ENCODE measurements at regions of chr18 and their contacts with region 1.

Region 1: DNA sequence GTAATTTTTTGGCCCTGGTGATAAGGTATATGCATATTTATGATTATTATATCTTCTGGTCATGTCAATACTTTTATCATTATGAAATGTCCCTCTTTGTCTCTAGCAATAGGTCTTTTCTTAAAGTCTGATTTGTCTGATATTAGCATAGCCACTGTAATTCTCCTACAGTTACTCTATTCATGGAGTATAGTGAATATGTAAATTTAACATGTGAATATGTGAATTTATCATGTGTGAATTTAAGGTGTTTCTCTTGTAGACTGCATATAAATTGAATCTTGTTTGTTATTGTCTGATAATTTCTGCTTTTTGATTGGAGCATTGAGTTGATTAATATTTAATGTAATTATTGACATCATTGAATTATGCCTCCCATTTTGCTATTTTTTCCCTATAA is 259.4 kb downstream of the HRH4 start:
- H3K4me3 Mint-ChIP-seq: no peak overlapping the region
- H3K27ac Mint-ChIP-seq: no peak overlapping the region
- H3K4me1 Mint-ChIP-seq: no peaks in the 10 kb centered on the region
- H3K27me3 Mint-ChIP-seq: peaks cover 1% of the 10 kb centered on the region

Region 2: DNA sequence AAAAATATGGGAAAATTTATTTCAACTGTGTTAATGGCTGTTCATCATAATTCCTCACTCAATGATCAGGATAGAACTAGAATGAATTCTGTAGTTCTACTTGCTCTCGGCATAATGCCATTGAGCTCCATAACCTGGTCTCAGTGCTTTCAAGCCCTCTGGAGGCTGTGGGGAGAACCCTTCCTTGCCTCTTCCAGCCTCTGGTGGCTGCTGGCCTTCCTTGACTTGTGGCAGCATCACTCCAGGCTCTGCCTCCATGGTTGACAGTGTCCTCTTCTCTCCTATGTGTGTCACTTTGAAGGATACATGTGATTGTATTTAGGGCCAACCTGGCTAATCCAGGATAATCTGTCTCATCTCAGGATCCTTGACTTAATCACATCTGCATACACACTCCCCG is 607.9 kb before region 1 on chr18:
- intact Hi-C with region 1: no loop called
- H3K4me3 Mint-ChIP-seq: no peak overlapping the region
- H3K27ac Mint-ChIP-seq: no peak overlapping the region
- H3K4me1 Mint-ChIP-seq: peaks cover 10% of the 10 kb centered on the region
- H3K27me3 Mint-ChIP-seq: no peaks in the 10 kb centered on the region

Region 3: GRCh38 chr18:24659827-24660720 is 59.7 kb before region 1 on chr18:
- intact Hi-C with region 1: no loop called
- H3K4me3 Mint-ChIP-seq: peak overlapping the region; percentile 73
- H3K27ac Mint-ChIP-seq: peak overlapping the region; percentile 39
- H3K4me1 Mint-ChIP-seq: peaks cover 11% of the 10 kb centered on the region
- H3K27me3 Mint-ChIP-seq: no peaks in the 10 kb centered on the region

Region 4: DNA sequence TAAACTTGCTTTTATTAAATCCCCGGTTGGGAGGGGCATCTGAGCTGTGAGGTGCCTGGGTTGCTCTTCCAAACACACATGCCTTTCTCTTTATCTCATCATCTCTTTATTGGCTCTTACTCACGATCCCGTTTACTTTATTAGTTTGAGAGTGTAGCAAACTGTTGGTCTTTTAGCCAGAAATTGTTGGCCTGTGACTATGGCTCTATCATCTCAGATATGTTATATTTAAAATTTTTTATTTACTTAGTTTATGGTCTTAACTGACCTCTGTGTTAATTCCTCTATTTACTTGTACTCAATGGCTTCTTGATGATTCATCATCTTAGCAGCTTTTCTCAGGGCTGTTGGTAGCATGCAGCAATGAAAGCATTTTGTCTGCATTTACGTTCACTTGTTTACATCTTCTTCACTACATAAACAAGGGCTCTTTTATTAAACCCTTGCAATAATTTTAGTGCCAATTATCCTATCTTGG is 149.0 kb after region 1 on chr18:
- intact Hi-C with region 1: loop called (anchors 5 kb)
- H3K4me3 Mint-ChIP-seq: no peak overlapping the region
- H3K27ac Mint-ChIP-seq: no peak overlapping the region
- H3K4me1 Mint-ChIP-seq: no peaks in the 10 kb centered on the region
- H3K27me3 Mint-ChIP-seq: no peaks in the 10 kb centered on the region

Region 5: DNA sequence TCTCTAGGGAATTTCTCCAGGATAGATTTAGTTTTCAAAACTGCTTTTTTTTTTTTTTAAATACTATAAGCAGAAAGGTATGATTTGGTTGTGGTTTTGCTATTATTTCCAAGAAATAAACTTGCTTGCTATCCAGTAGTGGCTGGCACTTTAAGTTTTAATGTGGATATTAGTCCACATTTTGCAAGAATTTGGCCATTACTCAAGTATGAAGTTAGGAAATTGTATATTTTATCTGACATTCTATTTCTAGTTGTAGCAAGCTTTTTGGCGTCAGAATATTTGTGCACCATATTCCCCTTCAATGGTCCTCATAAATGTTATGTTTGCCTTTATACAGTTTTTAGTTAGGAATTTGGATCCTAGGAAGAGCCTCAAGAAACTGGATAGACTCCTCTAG is 405.9 kb after region 1 on chr18:
- intact Hi-C with region 1: no loop called
- H3K4me3 Mint-ChIP-seq: no peak overlapping the region
- H3K27ac Mint-ChIP-seq: no peak overlapping the region
- H3K4me1 Mint-ChIP-seq: peaks cover 6% of the 10 kb centered on the region
- H3K27me3 Mint-ChIP-seq: no peaks in the 10 kb centered on the region

Measured in dendritic cell treated with granulocyte-macrophage colony-stimulating factor and Interleukin-4, amounts not matched to agents 40 ng/mL and 50 ng/mL, for 4 days (primary cell).